OCI-LY7 (cell line): ENCODE measurements at regions of chr21 and their contacts with region 1.

Region 1: GRCh38 chr21:34526618-34527290 is 14.7 kb upstream of the KCNE1 start:
- DNase-seq: no peak
- H3K4me3 ChIP-seq: peak overlapping the region; percentile 12
- H3K27ac ChIP-seq: no peak overlapping the region
- H3K4me1 ChIP-seq: no peaks in the 10 kb centered on the region
- CTCF ChIP-seq: no peak

Region 2: GRCh38 chr21:34362136-34362444 is 164.7 kb before region 1 on chr21:
- CTCF ChIA-PET with region 1: no interaction called
- POLR2A ChIA-PET with region 1: no interaction called
- intact Hi-C with region 1: no loop called
- DNase-seq: no peak
- H3K4me3 ChIP-seq: no peak overlapping the region
- H3K27ac ChIP-seq: no peak overlapping the region
- H3K4me1 ChIP-seq: peaks cover 4% of the 10 kb centered on the region
- CTCF ChIP-seq: peak; percentile 66

Region 3: GRCh38 chr21:34582506-34583150 is 55.9 kb after region 1 on chr21:
- CTCF ChIA-PET with region 1: interaction called, 3 read pairs
- POLR2A ChIA-PET with region 1: no interaction called
- intact Hi-C with region 1: loop called (anchors 5 kb)
- DNase-seq: peak; percentile 33
- H3K4me3 ChIP-seq: no peak overlapping the region
- H3K27ac ChIP-seq: no peak overlapping the region
- H3K4me1 ChIP-seq: no peaks in the 10 kb centered on the region
- CTCF ChIP-seq: peak; percentile 65